Activated CD4-positive, alpha-beta memory T cell treated with anti-CD3 and anti-CD28 coated beads, Interleukin-2, amount 10 ng/mL, durations not matched to agents 7 days and 5 days (primary cell): ENCODE measurements at regions of chr2 and their contacts with region 1.

Region 1: GRCh38 chr2:136327162-136327852 is 209.4 kb upstream of the CXCR4 start:
- DNase-seq: peak; percentile 85
- H3K4me3 Mint-ChIP-seq: peak overlapping the region; percentile 59
- H3K27ac Mint-ChIP-seq: peak overlapping the region; percentile 90
- H3K4me1 Mint-ChIP-seq: peaks cover 66% of the 10 kb centered on the region
- H3K27me3 Mint-ChIP-seq: no peaks in the 10 kb centered on the region

Region 2: GRCh38 chr2:136238286-136239078 is 88.8 kb before region 1 on chr2:
- CTCF ChIA-PET with region 1: interaction called, 3 read pairs
- POLR2A ChIA-PET with region 1: interaction called, 17 read pairs
- DNase-seq: peak; percentile 53
- H3K4me3 Mint-ChIP-seq: no peak overlapping the region
- H3K27ac Mint-ChIP-seq: peak overlapping the region; percentile 75
- H3K4me1 Mint-ChIP-seq: peaks cover 58% of the 10 kb centered on the region
- H3K27me3 Mint-ChIP-seq: no peaks in the 10 kb centered on the region

Region 3: DNA sequence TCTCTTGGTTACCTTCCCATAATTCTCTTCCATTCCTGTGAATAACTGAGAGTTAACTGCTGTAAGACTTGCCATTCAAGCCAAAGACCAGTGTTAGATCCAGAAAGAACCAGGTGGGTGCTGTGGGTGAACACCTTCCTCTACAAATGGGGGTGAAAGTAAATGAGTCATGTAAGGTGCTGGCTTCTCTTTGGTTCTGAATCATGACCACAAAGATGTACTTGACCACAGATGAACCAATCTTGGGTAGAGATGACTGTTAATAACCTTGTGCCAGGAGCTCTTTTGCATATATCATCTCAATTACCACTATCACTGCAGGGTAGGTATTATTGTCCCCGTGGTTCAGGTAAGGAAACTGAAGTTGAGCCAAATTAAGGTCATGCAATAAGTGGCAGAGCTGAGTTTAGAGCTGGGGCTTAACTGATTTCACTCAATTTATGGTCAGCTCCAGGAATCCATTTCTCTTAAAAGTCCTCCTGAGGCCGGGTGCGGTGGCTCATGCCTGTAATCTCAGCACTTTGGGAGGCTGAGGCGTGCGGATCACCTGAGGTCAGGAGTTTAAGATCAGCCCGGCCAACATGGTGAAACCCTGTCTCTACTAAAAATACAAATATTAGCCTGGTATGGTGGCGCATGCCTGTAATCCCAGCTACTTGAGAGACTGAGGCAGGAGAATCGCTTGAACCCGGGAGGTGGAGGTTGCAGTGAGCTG is 35.5 kb after region 1 on chr2:
- CTCF ChIA-PET with region 1: no interaction called
- POLR2A ChIA-PET with region 1: interaction called, 15 read pairs
- DNase-seq: peak; percentile 49
- H3K4me3 Mint-ChIP-seq: no peak overlapping the region
- H3K27ac Mint-ChIP-seq: no peak overlapping the region
- H3K4me1 Mint-ChIP-seq: peaks cover 24% of the 10 kb centered on the region
- H3K27me3 Mint-ChIP-seq: peaks cover 54% of the 10 kb centered on the region

Region 4: DNA sequence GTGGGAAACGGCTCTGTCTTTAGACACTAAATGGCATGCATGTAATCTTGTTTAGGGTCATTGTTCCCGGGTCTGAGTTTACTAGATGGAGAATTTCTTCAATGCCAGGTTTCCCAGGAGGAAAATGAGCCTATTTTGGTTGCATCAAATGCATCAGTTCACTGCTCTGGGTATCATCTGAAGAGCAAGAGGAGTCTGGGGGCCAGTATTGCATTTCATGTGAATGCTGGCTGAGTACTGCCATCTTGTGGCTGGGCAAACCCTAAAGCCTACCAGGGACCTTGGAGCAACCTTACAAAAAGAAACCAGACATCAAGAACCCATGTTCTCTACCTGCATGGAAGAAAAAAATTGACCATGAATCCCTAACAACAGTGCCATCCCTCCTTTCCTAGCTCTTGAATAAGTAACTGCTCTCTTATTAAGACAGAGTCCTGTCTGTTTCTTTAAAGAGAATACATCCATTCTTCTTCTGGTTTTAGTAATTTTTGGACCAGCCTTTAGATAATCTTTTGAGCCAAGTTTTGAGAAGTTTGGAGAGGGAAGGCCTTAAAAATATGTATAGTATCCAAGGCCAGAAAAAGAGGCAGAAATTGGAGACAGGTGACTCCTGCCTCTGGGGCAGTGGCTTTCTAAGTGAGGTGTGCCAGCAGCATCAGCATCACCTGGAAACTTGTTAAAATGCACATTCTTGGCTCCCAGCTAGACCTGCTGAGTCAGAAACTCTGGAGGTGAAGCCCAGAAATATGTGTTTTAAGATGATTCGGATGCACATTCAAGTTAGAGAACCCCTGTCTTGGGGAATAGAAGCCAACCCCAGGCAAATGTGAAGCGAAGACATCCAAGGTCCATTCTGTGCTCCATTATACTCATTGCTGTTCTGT is 51.6 kb after region 1 on chr2:
- CTCF ChIA-PET with region 1: interaction called, 4 read pairs
- POLR2A ChIA-PET with region 1: interaction called, 19 read pairs
- DNase-seq: peak; percentile 82
- H3K4me3 Mint-ChIP-seq: no peak overlapping the region
- H3K27ac Mint-ChIP-seq: peak overlapping the region; percentile 37
- H3K4me1 Mint-ChIP-seq: peaks cover 87% of the 10 kb centered on the region
- H3K27me3 Mint-ChIP-seq: no peaks in the 10 kb centered on the region

Region 5: GRCh38 chr2:136394136-136395060 is 67.1 kb after region 1 on chr2:
- CTCF ChIA-PET with region 1: no interaction called
- POLR2A ChIA-PET with region 1: no interaction called
- DNase-seq: no peak
- H3K4me3 Mint-ChIP-seq: no peak overlapping the region
- H3K27ac Mint-ChIP-seq: no peak overlapping the region
- H3K4me1 Mint-ChIP-seq: peaks cover 24% of the 10 kb centered on the region
- H3K27me3 Mint-ChIP-seq: peaks cover 6% of the 10 kb centered on the region